Kidney (tissue), 22 donors: ENCODE measurements at regions of chr2 and their contacts with region 1.

Region 1: DNA sequence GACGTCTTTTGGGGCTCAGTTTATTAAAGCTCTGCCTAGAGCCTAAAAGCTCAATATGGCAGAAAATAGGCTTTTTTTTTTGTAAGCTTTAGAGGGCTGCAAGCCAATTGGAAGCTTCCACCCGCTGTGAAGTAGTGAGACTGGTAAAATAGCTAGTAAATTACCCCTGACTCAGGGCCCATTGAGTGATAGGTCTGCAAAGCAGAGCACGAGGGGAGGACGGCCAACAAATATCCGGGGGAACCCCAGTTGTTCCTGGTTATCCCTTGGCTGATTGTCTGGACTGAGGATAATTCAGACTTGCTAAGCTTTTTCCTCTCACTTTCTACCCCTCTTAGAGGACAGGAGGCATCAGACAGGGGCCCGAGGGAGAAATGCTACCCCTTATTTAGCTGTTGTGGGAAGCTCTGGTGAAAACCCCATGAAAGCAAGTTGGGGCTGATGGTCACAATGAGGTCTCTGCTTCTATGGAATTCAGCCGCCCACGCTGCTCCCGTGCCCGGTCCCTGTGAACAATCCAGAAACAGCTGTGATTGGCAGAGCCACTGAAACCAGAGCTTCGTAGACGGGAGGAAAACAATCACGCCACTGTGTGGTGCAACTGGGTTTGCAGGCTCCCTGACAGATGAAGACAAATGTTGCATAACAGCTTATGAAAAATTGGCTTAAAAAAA is 141.9 kb upstream of the LGALSL start:
- DNase-seq: peak; percentile 85 to 94 (median 87)
- H3K4me3 ChIP-seq: peak overlapping the region in 2 of 3 donors; percentile 1 to 9
- H3K27ac ChIP-seq: no peak overlapping the region
- H3K4me1 ChIP-seq: peaks cover 0 to 9% (median 4%) of the 10 kb centered on the region in 3 donors
- H3K27me3 ChIP-seq: no peaks in the 10 kb centered on the region
- CTCF ChIP-seq: peak; percentile 70

Region 2: DNA sequence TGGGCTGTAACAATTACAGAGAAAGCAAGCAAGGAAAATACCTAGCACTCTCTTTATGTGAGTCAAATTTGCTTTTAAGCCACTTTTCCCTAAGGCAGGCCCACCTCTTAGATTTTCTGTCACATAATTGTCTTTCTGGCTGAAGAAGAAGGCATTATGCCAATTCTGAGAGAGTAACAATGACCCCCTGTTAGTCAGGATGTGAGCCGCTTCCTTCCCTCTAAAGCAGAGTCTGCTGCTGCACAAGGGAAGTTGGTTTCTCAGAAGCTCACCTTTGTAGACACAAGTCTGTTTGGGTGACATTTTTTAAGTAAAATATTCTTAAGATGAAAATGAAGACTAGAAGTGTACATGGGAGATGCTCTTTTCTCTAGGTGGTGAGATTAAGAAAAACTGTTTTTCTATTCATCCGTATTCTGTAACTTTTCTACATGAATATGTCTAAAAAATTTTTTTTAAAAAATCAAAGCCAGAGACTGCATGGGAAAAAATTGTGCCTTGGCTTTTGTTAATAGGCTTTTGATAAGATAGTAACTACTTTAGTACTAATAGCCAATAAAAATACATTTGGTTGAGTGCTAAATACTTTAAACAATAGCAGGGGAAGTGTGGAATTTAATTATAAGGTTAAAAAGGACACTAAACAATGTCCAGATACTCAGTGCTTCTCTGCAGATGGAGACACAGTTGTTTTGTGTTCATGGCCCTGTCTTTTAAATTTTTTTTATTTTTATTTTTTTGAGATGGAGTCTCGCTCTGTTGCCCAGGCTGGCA is 259.4 kb before region 1 on chr2:
- intact Hi-C with region 1: loop called (anchors 10 kb)
- DNase-seq: peak in 1 of 5 donors; percentile 43
- H3K4me3 ChIP-seq: no peak overlapping the region
- H3K27ac ChIP-seq: peak overlapping the region in 1 of 2 donors; percentile 36
- H3K4me1 ChIP-seq: peaks cover 0 to 3% (median 0%) of the 10 kb centered on the region in 3 donors
- H3K27me3 ChIP-seq: no peaks in the 10 kb centered on the region
- CTCF ChIP-seq: no peak